Psoas muscle (tissue), 8 donors: ENCODE measurements at regions of chr3 and their contacts with region 1.

Region 1: DNA sequence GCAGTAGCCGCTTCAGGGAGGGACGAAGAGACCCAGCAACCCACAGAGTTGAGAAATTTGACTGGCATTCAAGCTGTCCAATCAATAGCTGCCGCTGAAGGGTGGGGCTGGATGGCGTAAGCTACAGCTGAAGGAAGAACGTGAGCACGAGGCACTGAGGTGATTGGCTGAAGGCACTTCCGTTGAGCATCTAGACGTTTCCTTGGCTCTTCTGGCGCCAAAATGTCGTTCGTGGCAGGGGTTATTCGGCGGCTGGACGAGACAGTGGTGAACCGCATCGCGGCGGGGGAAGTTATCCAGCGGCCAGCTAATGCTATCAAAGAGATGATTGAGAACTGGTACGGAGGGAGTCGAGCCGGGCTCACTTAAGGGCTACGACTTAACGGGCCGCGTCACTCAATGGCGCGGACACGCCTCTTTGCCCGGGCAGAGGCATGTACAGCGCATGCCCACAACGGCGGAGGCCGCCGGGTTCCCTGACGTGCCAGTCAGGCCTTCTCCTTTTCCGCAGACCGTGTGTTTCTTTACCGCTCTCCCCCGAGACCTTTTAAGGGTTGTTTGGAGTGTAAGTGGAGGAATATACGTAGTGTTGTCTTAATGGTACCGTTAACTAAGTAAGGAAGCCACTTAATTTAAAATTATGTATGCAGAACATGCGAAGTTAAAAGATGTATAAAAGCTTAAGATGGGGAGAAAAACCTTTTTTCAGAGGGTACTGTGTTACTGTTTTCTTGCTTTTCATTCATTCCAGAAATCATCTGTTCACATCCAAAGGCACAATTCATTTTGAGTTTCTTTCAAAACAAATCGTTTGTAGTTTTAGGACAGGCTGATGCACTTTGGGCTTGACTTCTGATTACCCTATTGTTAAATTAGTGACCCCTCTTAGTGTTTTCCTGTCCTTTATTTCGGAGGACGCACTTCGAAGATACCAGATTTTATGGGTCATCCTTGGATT is at the start of gene MLH1:
- DNase-seq: peak; percentile 94 to 98
- ATAC-seq: peak; percentile 88 to 93 (median 92)
- H3K4me3 ChIP-seq: peak within 1 kb of the TSS; percentile 79
- H3K27ac ChIP-seq: peak within 1 kb of the TSS; percentile 98
- H3K4me1 ChIP-seq: peaks cover 58% of the 10 kb centered on the region
- H3K27me3 ChIP-seq: no peaks in the 10 kb centered on the region
- CTCF ChIP-seq: no peak
- total RNA-seq, gene MLH1: 32.5 to 37.7 (median 35.6) TPM

Region 2: DNA sequence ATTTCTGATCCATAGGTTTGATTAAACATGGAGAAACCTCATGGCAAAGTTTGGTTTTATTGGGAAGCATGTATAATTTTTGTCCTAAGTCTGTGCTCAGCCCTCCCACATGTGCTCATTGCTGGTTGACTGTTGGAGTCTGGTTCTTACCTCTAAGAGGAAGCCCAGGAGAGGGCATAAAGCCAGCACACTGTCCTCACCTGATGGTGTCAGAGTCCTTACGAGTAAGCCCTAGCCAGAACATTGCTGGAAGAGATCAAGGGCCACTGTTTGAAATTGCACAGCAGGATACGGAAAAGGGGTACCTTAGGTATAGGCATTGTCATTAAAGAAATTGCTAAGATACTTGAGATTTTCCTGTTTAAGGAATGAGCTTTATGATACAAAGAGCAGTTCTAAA is 21.0 kb after region 1 on chr3:
- intact Hi-C with region 1: no loop called
- DNase-seq: no peak
- ATAC-seq: peak in 1 of 4 donors; percentile 65
- H3K4me3 ChIP-seq: no peak overlapping the region
- H3K27ac ChIP-seq: no peak overlapping the region
- H3K4me1 ChIP-seq: no peaks in the 10 kb centered on the region
- H3K27me3 ChIP-seq: no peaks in the 10 kb centered on the region
- CTCF ChIP-seq: no peak

Region 3: DNA sequence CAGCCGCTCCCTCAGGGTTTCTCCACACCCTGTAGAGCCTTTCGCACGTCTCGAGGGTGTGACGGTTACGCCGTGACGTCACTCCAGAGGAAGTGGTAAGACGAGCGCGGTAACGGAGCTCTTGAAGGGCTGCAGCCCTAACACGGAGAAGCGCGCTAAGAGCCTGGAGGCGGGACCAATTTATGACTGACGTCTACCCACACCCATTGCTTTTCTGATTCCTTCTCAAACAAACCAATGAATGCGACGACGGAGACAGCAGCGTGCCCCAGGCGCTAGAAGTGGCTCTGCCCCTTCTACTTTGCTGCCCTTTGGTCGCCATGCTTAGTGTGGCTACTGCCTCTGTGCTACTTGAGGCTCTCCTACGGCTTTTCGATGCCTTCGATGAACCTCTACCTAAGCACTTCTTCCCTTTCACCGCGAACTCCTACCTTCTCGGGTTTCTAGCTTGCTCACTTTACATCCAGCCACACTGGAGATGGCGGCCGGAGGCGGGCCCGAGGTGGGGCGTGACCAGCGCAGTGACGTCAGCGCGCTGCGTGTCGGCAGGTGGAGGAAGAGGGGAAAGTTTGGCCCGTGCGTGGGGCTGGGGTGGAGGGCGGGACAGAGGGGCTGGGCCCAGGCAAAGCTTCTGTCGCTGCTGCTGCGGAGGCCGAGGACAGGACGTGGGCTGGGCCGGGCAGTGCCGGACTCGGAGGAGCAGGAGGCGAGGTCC is 1171.5 kb after region 1 on chr3 and contains the start of gene OXSR1:
- intact Hi-C with region 1: loop called in 1 of 2 experiments (anchors 10 kb)
- DNase-seq: peak; percentile 99
- ATAC-seq: peak; percentile 92 to 95 (median 93)
- H3K4me3 ChIP-seq: peak within 1 kb of the TSS; percentile 92
- H3K27ac ChIP-seq: peak within 1 kb of the TSS; percentile 99
- H3K4me1 ChIP-seq: peaks cover 29% of the 10 kb centered on the region
- H3K27me3 ChIP-seq: no peaks in the 10 kb centered on the region
- CTCF ChIP-seq: no peak
- total RNA-seq, gene OXSR1: 30.6 to 60.1 (median 47.7) TPM